Naive thymus-derived CD4-positive, alpha-beta T cell (primary cell): ENCODE measurements at regions of chr3 and their contacts with region 1.

Region 1: DNA sequence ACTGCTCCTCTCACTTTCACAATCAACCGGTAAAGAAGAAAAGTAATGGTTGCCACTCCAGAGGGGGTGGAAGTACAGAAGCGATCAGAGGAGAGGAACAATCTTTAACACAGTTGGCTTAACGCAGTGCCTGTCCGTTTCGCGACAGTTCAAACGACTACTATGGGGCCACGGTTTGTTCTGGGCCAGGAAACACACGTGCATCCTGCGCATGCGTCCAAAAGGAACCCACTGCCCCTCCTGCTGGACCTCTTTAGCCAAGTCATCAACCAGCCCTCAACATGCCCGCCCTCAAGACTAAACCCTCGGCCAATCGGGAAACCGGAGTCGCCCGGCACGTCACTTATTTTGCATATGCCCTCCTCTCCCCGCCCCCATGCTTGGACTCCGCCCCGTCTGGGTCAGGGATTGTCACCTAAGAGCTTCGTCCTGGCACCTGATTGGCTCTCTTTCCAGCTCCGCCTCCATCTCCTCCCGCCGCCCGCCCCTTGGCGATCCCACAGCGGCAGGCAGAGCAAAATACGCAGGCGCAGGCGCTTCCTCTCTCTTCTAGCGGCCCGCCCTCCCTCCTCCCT is 345 bp upstream of the CDV3 start:
- DNase-seq: peak; percentile 99 to 100 (median 100)
- ATAC-seq: peak; percentile 90
- H3K4me3 ChIP-seq: peak overlapping the region; percentile 59
- H3K4me3 Mint-ChIP-seq: peak overlapping the region; percentile 74 to 99 (median 89)
- H3K27ac ChIP-seq: peak overlapping the region; percentile 90
- H3K27ac Mint-ChIP-seq: peak overlapping the region; percentile 91 to 100 (median 98)
- H3K4me1 ChIP-seq: peaks cover 29 to 38% of the 10 kb centered on the region in 2 donors
- H3K4me1 Mint-ChIP-seq: peaks cover 26 to 67% (median 53%) of the 10 kb centered on the region in 7 donors
- H3K27me3 ChIP-seq: no peaks in the 10 kb centered on the region
- H3K27me3 Mint-ChIP-seq: no peaks in the 10 kb centered on the region

Region 2: DNA sequence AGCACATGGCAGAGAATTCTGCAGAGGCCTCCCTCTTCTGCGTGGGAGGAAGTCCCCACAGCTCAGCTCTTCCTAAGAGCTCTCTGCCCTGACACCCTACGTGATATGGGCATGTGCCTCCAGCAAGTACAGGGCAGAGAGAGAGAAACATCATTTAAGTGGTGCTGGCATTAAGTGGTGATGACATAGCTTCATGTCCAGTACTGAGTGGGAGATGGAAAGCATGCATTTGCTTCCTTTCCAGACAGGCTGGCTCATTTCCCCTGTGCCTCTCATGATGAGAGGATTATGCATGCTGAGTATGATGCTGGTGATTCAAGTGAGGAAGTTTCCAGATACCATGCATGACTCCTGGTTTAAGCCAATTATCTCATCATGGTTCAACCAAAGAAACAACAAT is 146.4 kb before region 1 on chr3:
- CTCF ChIA-PET with region 1: no interaction called
- POLR2A ChIA-PET with region 1: no interaction called
- intact Hi-C with region 1: loop called in 1 of 2 experiments (anchors 5 kb)
- DNase-seq: no peak
- ATAC-seq: no peak
- H3K4me3 ChIP-seq: no peak overlapping the region
- H3K4me3 Mint-ChIP-seq: no peak overlapping the region
- H3K27ac ChIP-seq: no peak overlapping the region
- H3K27ac Mint-ChIP-seq: peak overlapping the region in 1 of 9 donors; percentile 8
- H3K4me1 ChIP-seq: peaks cover 0 to 3% of the 10 kb centered on the region in 2 donors
- H3K4me1 Mint-ChIP-seq: peaks cover 0 to 4% (median 0%) of the 10 kb centered on the region in 7 donors
- H3K27me3 ChIP-seq: no peaks in the 10 kb centered on the region
- H3K27me3 Mint-ChIP-seq: peaks cover 0 to 7% (median 0%) of the 10 kb centered on the region in 5 donors

Region 3: DNA sequence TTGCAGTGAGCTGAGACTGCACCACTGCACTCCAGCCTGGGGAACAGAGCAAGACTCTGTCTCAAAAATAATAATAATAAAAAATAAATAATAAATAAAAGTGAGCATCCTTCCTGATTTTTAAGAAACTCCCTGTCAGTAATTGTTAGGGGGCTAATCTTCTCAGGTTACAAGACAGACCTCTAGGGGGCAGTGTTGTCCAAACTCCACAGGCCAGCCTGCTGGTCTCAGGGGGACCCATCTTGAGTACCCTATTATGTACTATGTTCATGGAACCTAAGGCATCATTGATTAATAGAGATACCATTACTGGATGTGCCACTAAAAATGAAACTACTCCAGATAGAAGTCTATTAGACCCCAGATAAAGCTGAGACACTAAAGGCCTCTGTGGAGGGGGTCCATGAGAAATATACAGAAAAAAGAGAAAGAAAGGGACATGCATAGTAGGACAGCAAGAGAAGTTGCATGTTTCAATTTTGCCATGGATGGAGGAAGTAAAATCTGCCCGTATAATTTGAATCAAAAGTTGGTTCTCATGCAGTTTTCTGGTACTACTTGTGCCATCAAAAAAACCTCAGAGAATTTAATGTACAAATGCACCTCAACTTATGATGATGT is 85.1 kb before region 1 on chr3:
- CTCF ChIA-PET with region 1: interaction called, 80 read pairs
- POLR2A ChIA-PET with region 1: interaction called, 179 read pairs
- intact Hi-C with region 1: loop called (anchors 1 kb)
- DNase-seq: peak in 8 of 9 donors; percentile 40 to 67 (median 50)
- ATAC-seq: peak; percentile 72
- H3K4me3 ChIP-seq: no peak overlapping the region
- H3K4me3 Mint-ChIP-seq: peak overlapping the region in 6 of 10 donors; percentile 5 to 73 (median 32)
- H3K27ac ChIP-seq: peak overlapping the region; percentile 34
- H3K27ac Mint-ChIP-seq: peak overlapping the region in 8 of 9 donors; percentile 90 to 98 (median 96)
- H3K4me1 ChIP-seq: peaks cover 22 to 47% of the 10 kb centered on the region in 2 donors
- H3K4me1 Mint-ChIP-seq: peaks cover 22 to 52% (median 51%) of the 10 kb centered on the region in 7 donors
- H3K27me3 ChIP-seq: no peaks in the 10 kb centered on the region
- H3K27me3 Mint-ChIP-seq: no peaks in the 10 kb centered on the region

Region 4: DNA sequence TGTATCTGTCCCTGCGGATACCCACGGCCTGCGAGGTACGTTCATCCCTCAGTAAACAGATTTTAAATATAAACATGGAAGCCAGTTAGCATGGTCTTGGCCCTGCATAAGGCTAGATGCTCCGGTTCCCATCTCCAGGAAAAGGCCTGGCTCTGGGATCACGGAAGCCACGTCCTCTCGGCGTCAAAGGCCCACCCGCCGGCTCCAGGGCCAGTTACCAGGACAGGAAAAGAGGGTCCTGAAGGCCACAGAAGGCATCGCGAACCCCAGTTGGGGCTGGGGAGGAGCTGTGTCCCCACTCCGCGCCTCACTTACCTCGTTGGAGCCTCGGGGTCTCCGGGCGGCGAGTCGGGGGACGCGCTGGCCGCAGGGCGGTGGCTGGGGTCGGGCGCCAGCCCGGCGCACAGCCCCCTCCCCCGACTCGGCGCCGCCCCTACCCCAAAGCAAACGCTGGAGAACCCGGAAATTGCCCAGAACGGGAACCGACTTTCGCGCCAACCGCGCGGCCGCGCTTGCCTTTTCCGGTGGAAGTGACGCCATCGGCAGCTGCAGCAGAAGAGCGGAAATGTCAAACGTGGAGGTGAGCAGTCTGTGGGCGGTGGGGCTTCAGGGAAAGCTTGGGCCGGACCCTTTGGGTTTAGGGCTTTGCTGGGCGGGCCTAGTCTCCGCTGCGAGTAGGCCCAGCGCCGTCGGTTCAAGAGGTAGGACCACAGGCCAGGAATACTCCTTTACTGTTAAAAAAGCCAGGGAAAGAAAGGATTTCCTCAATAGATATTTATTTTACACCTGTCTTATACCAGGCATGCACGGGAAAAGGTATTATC is 88.5 kb after region 1 on chr3 and contains the start of gene TOPBP1:
- CTCF ChIA-PET with region 1: interaction called, 3 read pairs
- POLR2A ChIA-PET with region 1: interaction called, 17 read pairs
- intact Hi-C with region 1: loop called (anchors 1 kb)
- DNase-seq: peak; percentile 68 to 88 (median 85)
- ATAC-seq: peak; percentile 90
- H3K4me3 ChIP-seq: peak within 1 kb of the TSS; percentile 80
- H3K4me3 Mint-ChIP-seq: peak within 1 kb of the TSS; percentile 90 to 99 (median 97)
- H3K27ac ChIP-seq: peak within 1 kb of the TSS; percentile 79
- H3K27ac Mint-ChIP-seq: peak within 1 kb of the TSS; percentile 93 to 99 (median 97)
- H3K4me1 ChIP-seq: peaks cover 8 to 25% of the 10 kb centered on the region in 2 donors
- H3K4me1 Mint-ChIP-seq: peaks cover 30 to 53% (median 46%) of the 10 kb centered on the region in 7 donors
- H3K27me3 ChIP-seq: no peaks in the 10 kb centered on the region
- H3K27me3 Mint-ChIP-seq: no peaks in the 10 kb centered on the region
- total RNA-seq, gene TOPBP1: 26.3 to 73.8 (median 37.6) TPM

Region 5: GRCh38 chr3:133887803-133888559 is 314.8 kb after region 1 on chr3:
- CTCF ChIA-PET with region 1: no interaction called
- POLR2A ChIA-PET with region 1: no interaction called
- intact Hi-C with region 1: no loop called
- DNase-seq: no peak
- ATAC-seq: no peak
- H3K4me3 ChIP-seq: no peak overlapping the region
- H3K4me3 Mint-ChIP-seq: no peak overlapping the region
- H3K27ac ChIP-seq: no peak overlapping the region
- H3K27ac Mint-ChIP-seq: no peak overlapping the region
- H3K4me1 ChIP-seq: no peaks in the 10 kb centered on the region
- H3K4me1 Mint-ChIP-seq: peaks cover 0 to 4% (median 0%) of the 10 kb centered on the region in 7 donors
- H3K27me3 ChIP-seq: no peaks in the 10 kb centered on the region
- H3K27me3 Mint-ChIP-seq: peaks cover 11 to 44% (median 33%) of the 10 kb centered on the region in 5 donors

Region 6: GRCh38 chr3:134250717-134251220 is 677.6 kb after region 1 on chr3 and contains the start of gene RYK:
- CTCF ChIA-PET with region 1: no interaction called
- POLR2A ChIA-PET with region 1: interaction called, 4 read pairs
- intact Hi-C with region 1: loop called in 1 of 2 experiments (anchors 1 kb)
- DNase-seq: peak; percentile 65 to 85 (median 79)
- ATAC-seq: peak; percentile 93
- H3K4me3 ChIP-seq: peak within 1 kb of the TSS; percentile 78
- H3K4me3 Mint-ChIP-seq: peak within 1 kb of the TSS; percentile 90 to 99 (median 96)
- H3K27ac ChIP-seq: peak within 1 kb of the TSS; percentile 86
- H3K27ac Mint-ChIP-seq: peak within 1 kb of the TSS; percentile 72 to 99 (median 95)
- H3K4me1 ChIP-seq: peaks cover 12 to 14% of the 10 kb centered on the region in 2 donors
- H3K4me1 Mint-ChIP-seq: peaks cover 25 to 62% (median 57%) of the 10 kb centered on the region in 7 donors
- H3K27me3 ChIP-seq: no peaks in the 10 kb centered on the region
- H3K27me3 Mint-ChIP-seq: peaks cover 0 to 54% (median 0%) of the 10 kb centered on the region in 5 donors
- total RNA-seq, gene RYK: 10.7 to 53.5 (median 50.5) TPM